WTC11 (cell line): ENCODE measurements at regions of chr6 and their contacts with region 1.

Region 1: DNA sequence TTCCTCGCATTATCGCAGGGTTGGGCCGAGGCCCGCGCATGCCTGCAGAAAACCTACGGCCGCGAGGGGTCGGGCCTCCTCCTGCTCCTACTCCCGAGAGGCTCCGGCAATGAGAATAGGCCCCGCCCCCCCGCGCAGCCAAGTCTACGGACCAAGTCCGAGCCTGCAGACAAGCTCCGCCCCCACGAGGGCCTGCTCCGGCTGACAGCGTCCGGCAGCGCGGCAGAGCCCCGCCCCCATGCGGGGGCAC is 3.1 kb upstream of the GPSM3 start:
- DNase-seq: peak; percentile 100
- ATAC-seq: peak; percentile 88
- H3K4me3 Mint-ChIP-seq: peak overlapping the region; percentile 95
- H3K27ac Mint-ChIP-seq: no peak overlapping the region; the same call in 1 of the 2 replicates
- H3K4me1 Mint-ChIP-seq: peaks cover 53% of the 10 kb centered on the region
- H3K27me3 Mint-ChIP-seq: peaks cover 3% of the 10 kb centered on the region; the same call in 1 of the 2 replicates
- CTCF ChIP-seq: no peak; the same call in 1 of the 2 replicates

Region 2: GRCh38 chr6:32064706-32065105 is 130.9 kb before region 1 on chr6:
- CTCF ChIA-PET with region 1: no interaction called
- POLR2A ChIA-PET with region 1: no interaction called
- DNase-seq: no peak
- ATAC-seq: no peak
- H3K4me3 Mint-ChIP-seq: no peak overlapping the region
- H3K27ac Mint-ChIP-seq: no peak overlapping the region
- H3K4me1 Mint-ChIP-seq: peaks cover 3% of the 10 kb centered on the region
- H3K27me3 Mint-ChIP-seq: no peaks in the 10 kb centered on the region
- CTCF ChIP-seq: no peak

Region 3: GRCh38 chr6:32148289-32149091 is 47.1 kb before region 1 on chr6:
- CTCF ChIA-PET with region 1: interaction called, 17 read pairs
- POLR2A ChIA-PET with region 1: interaction called, 6 read pairs
- DNase-seq: peak; percentile 96
- ATAC-seq: peak; percentile 74
- H3K4me3 Mint-ChIP-seq: peak overlapping the region; percentile 95
- H3K27ac Mint-ChIP-seq: peak overlapping the region; percentile 12
- H3K4me1 Mint-ChIP-seq: peaks cover 51% of the 10 kb centered on the region
- H3K27me3 Mint-ChIP-seq: peaks cover 65% of the 10 kb centered on the region
- CTCF ChIP-seq: peak; percentile 46; the same call in 1 of the 2 replicates

Region 4: GRCh38 chr6:32166411-32167061 is 29.0 kb before region 1 on chr6:
- CTCF ChIA-PET with region 1: interaction called, 11 read pairs
- POLR2A ChIA-PET with region 1: interaction called, 4 read pairs
- DNase-seq: peak; percentile 88
- ATAC-seq: peak; percentile 93
- H3K4me3 Mint-ChIP-seq: no peak overlapping the region
- H3K27ac Mint-ChIP-seq: no peak overlapping the region
- H3K4me1 Mint-ChIP-seq: peaks cover 11% of the 10 kb centered on the region
- H3K27me3 Mint-ChIP-seq: no peaks in the 10 kb centered on the region
- CTCF ChIP-seq: no peak

Region 5: GRCh38 chr6:32255199-32256153 is 59.9 kb after region 1 on chr6:
- CTCF ChIA-PET with region 1: interaction called, 23 read pairs
- POLR2A ChIA-PET with region 1: interaction called, 5 read pairs
- DNase-seq: peak; percentile 75
- ATAC-seq: peak; percentile 94
- H3K4me3 Mint-ChIP-seq: peak overlapping the region; percentile 66
- H3K27ac Mint-ChIP-seq: peak overlapping the region; percentile 97
- H3K4me1 Mint-ChIP-seq: peaks cover 18% of the 10 kb centered on the region
- H3K27me3 Mint-ChIP-seq: peaks cover 5% of the 10 kb centered on the region; the same call in 1 of the 2 replicates
- CTCF ChIP-seq: peak; percentile 56